ENCODE measurements at regions of chr5 and their contacts with region 1.

Region 1: DNA sequence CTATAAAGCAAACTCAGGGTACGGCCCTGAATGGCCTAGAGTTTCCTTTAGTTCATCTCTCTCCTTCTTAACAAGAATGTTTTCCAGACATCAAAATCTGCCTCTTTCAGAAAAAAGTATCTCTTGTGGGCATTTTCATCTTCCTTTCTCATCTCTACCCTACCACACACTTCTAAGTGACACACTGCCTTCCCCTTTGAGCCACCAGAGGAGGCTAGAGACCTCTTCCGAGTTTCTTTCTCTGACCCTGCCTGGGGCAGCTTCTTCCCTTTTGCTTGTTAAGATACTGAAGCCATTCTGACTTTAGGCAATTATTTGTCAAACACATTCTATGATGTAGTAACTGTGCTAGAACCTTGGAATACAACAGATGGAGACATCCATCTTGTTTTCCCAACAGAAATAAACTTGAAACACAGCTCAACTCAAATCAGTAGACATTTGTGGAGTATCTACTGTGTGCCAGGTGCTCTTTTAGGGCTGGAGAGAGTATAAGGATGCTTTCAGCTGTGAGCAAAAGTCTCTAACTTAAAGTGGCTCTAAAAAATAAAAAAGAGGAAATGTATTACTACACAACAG is 8.6 kb upstream of the SV2C start:
- DNase-seq: peak; percentile 37
- H3K4me3 Mint-ChIP-seq: no peak overlapping the region
- H3K27ac Mint-ChIP-seq: no peak overlapping the region
- H3K4me1 Mint-ChIP-seq: no peaks in the 10 kb centered on the region
- H3K27me3 Mint-ChIP-seq: peaks cover 70% of the 10 kb centered on the region

Region 2: DNA sequence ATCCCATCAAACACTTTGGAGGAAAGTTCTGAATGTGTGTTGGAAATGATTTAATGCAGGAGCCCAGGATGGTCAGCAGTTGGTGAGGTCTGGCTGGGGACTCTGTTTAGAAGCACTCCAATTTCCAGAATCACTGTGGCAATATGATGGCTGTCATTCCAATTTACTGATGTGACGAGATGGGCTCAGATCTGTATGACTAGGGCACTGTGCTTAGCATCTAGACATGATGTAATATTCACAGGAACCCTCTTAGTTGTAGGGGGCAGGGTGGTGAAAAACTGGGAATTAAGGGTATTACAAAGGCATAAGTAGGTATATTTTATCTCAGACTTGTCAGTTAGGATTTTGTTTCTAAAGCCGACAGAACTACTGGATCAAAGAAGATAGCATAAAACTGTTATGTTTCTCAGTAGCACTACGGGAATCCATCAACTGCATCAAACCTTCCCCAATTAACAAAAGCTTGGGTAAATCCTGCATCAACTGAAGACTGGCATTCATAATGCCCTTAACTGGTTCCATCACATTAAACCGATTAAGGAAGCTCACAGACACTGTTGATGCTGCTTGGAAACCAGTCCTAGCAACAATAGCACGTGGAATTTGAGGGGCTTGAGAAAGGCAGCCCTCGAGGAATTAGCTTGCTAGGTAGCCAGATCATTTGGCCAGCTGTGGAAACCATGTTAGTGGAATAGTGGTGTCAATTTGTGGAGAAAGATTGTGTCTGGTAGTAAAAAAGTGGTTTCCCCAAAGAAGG is 94.8 kb after region 1 on chr5:
- CTCF ChIA-PET with region 1: no interaction called
- POLR2A ChIA-PET with region 1: no interaction called
- DNase-seq: no peak
- H3K4me3 Mint-ChIP-seq: no peak overlapping the region
- H3K27ac Mint-ChIP-seq: no peak overlapping the region
- H3K4me1 Mint-ChIP-seq: peaks cover 21% of the 10 kb centered on the region
- H3K27me3 Mint-ChIP-seq: peaks cover 6% of the 10 kb centered on the region

Region 3: DNA sequence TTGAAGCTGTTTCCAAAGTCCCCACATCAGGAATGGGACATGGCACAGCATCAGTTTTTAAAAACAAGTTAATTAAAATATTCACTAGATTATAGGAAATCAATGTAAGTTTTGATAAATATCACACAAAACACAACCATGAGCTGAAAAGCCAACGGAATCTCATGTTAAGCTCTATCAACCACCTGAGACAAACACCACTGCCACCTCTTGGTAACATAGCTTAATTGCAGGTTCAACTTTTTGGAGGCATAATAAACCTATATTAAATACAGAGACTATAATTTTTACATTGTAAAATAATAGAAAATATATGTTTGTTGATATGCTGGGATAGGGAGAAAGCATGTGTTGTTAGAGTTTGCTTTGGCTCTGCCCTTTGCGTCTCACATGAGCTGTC is 134.7 kb after region 1 on chr5:
- CTCF ChIA-PET with region 1: interaction called, 10 read pairs
- POLR2A ChIA-PET with region 1: no interaction called
- DNase-seq: no peak
- H3K4me3 Mint-ChIP-seq: no peak overlapping the region
- H3K27ac Mint-ChIP-seq: no peak overlapping the region
- H3K4me1 Mint-ChIP-seq: no peaks in the 10 kb centered on the region
- H3K27me3 Mint-ChIP-seq: peaks cover 12% of the 10 kb centered on the region

Measured in activated CD4-positive, alpha-beta memory T cell treated with anti-CD3 and anti-CD28 coated beads, Interleukin-2, amount 10 ng/mL, durations not matched to agents 7 days and 5 days (primary cell).